ENCODE measurements at regions of chr7 and their contacts with region 1.

Region 1: GRCh38 chr7:831596-832166 is 595 bp upstream of the SUN1 start:
- DNase-seq: no peak
- ATAC-seq: peak; percentile 86

Region 2: GRCh38 chr7:841943-842342 is 10.3 kb after region 1 on chr7:
- intact Hi-C with region 1: loop called (anchors 1 kb)
- DNase-seq: no peak
- ATAC-seq: no peak

Measured in sciatic nerve (tissue), 2 donors.